CD14-positive monocyte (primary cell): ENCODE measurements at regions of chr3 and their contacts with region 1.

Region 1: GRCh38 chr3:177197041-177197727 is at the start of gene TBL1XR1:
- DNase-seq: peak; percentile 76 to 80 (median 79)
- H3K4me3 ChIP-seq: peak within 1 kb of the TSS; percentile 86 to 98 (median 96)
- H3K4me3 Mint-ChIP-seq: peak within 1 kb of the TSS; percentile 96 to 97
- H3K27ac ChIP-seq: peak within 1 kb of the TSS; percentile 77 to 92
- H3K27ac Mint-ChIP-seq: peak within 1 kb of the TSS; percentile 92 to 98 (median 96)
- H3K4me1 ChIP-seq: peaks cover 22 to 42% of the 10 kb centered on the region in 2 donors
- H3K4me1 Mint-ChIP-seq: peaks cover 44% of the 10 kb centered on the region
- H3K27me3 ChIP-seq: no peaks in the 10 kb centered on the region
- H3K27me3 Mint-ChIP-seq: no peaks in the 10 kb centered on the region
- CTCF ChIP-seq: no peak
- polyA plus RNA-seq, gene TBL1XR1: 10.2 to 20.4 (median 18.3) TPM

Region 2: DNA sequence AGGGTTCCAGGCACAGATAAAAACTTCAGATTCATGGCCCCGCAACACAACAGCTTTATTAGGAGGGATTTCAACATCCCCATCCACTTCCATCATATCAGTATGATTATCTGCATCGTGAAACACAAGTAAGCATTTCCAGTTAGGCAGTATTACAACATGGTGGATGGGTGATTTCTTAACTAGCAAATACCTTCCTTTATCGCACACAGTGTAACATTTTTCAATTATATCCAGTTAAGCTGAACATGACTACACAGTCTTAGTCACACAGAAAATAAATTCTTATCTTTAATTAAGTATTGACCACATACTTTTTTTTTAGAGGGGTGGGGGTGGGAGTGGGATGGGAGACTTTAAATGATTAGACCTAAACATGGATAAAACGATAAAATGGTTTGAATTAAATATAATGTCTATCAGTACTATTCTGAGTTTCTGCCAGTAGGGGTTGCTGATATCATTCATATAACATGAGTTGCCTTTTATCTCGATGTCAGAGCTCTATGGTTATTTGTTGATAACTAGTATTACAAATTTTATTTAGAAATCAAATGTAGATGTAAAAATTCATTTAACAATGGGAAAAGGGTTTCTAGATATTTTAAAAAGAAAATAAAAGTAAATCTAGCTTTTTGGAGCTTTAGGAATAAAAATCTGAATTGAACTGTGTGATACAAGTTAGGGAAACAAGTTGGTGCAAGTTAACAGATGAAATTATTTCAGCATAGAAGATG is 146.5 kb before region 1 on chr3:
- intact Hi-C with region 1: loop called in 1 of 2 experiments (anchors 5 kb)
- DNase-seq: peak; percentile 18 to 54 (median 33)
- H3K4me3 ChIP-seq: no peak overlapping the region
- H3K4me3 Mint-ChIP-seq: no peak overlapping the region
- H3K27ac ChIP-seq: no peak overlapping the region
- H3K27ac Mint-ChIP-seq: no peak overlapping the region
- H3K4me1 ChIP-seq: no peaks in the 10 kb centered on the region
- H3K4me1 Mint-ChIP-seq: no peaks in the 10 kb centered on the region
- H3K27me3 ChIP-seq: no peaks in the 10 kb centered on the region
- H3K27me3 Mint-ChIP-seq: no peaks in the 10 kb centered on the region
- CTCF ChIP-seq: peak; percentile 75

Region 3: DNA sequence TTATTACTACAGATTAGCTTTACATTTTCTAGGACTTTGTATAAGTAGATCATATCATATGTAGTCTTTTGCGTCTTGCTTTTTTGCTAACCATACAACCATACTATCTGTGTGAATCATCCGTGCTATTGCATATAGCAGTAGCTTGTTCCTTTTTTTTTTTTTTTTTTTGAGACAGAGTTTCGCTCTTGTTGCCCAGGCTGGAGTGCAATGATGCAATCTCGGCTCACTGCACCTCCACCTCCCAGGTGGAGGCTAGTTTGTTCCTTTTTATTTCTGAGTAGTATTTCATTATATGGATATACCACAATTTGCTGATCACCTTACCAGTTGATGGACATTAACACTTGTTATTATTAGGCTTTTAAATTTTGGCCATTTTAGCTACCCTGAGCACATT is 54.6 kb after region 1 on chr3:
- intact Hi-C with region 1: loop called in 1 of 2 experiments (anchors 10 kb)
- DNase-seq: peak; percentile 60 to 82 (median 76)
- H3K4me3 ChIP-seq: no peak overlapping the region
- H3K4me3 Mint-ChIP-seq: peak overlapping the region in 1 of 2 donors; percentile 58
- H3K27ac ChIP-seq: peak overlapping the region in 1 of 2 donors; percentile 15
- H3K27ac Mint-ChIP-seq: peak overlapping the region in 6 of 7 donors; percentile 56 to 70 (median 64)
- H3K4me1 ChIP-seq: peaks cover 13 to 17% of the 10 kb centered on the region in 2 donors
- H3K4me1 Mint-ChIP-seq: peaks cover 19% of the 10 kb centered on the region
- H3K27me3 ChIP-seq: no peaks in the 10 kb centered on the region
- H3K27me3 Mint-ChIP-seq: peaks cover 0 to 3% (median 0%) of the 10 kb centered on the region in 3 donors
- CTCF ChIP-seq: no peak

Region 4: DNA sequence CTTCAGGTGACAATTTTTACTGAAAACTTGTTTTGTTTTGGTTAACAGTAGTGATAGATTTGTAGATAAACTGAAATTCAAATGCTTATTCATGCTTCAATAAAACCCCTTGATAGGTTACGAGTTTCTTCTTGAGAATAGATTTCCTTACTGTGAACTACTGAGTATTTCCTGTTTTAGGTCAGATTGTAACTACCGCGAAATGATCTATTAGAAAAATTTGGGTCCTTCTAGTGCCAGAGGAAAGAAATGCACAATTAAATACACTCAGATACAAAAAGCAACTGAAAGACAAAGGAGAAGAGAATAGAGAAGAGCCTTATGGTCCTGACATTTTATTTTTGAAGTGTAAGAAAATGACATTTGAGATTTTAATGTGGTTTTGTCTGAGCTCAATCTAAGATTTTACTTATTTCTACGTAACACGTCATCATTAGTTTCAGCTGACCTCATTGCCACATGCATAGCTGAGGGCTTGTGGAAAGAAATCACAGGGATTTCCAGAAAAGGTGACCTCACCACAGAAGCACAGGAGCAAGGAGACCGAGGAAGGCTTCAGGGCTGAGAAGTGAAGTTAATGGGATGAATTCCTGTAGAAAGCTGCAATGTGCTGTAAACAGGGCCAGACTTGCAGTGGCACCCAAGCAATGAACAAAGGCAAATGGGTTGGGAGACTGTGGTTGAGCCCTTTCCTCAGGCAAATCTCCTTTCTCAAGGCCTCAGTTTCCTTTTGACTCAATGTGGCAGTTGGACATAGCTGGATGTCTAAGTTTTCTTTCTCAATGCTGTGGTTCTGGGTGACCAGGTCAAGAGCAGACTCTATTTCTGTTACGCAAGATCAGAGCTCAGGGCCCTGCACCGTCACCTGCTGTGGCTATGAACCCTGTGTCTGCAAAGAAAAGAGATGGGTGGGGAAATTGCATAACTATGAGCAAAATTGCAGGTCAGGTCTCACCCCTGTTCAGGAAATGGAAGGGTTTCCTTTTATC is 252.1 kb after region 1 on chr3:
- intact Hi-C with region 1: loop called (anchors 5 to 10 kb)
- DNase-seq: peak; percentile 68 to 93 (median 82)
- H3K4me3 ChIP-seq: peak overlapping the region in 1 of 3 experiments; percentile 17
- H3K4me3 Mint-ChIP-seq: peak overlapping the region in 1 of 2 donors; percentile 81
- H3K27ac ChIP-seq: peak overlapping the region; percentile 24 to 62
- H3K27ac Mint-ChIP-seq: peak overlapping the region; percentile 83 to 94 (median 86)
- H3K4me1 ChIP-seq: peaks cover 64 to 81% of the 10 kb centered on the region in 2 donors
- H3K4me1 Mint-ChIP-seq: peaks cover 28% of the 10 kb centered on the region
- H3K27me3 ChIP-seq: no peaks in the 10 kb centered on the region
- H3K27me3 Mint-ChIP-seq: no peaks in the 10 kb centered on the region
- CTCF ChIP-seq: no peak

Region 5: DNA sequence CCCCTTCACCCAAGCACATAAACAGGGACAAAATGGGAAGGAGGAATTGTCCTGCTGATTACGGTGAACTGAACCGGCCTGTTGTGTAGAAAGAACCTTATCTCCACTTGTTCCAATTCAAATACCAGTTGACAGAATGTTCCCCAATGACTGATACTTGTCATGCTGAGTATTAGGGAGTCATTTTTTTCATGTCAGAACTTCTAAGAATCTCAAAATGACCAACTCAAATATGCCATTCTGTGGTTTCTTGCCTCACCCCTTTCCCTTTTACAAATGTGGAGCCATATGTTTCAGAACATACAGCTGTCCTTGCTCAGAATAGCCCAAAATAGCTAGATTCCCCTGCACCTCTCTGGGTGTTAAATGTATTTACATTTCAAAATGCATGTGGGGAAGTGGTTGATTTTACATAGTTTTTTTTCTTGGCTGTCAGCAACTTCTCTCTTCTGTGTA is 406.0 kb after region 1 on chr3:
- intact Hi-C with region 1: loop called in 1 of 2 experiments (anchors 10 kb)
- DNase-seq: peak; percentile 24 to 40 (median 25)
- H3K4me3 ChIP-seq: peak overlapping the region in 1 of 3 experiments; percentile 15
- H3K4me3 Mint-ChIP-seq: peak overlapping the region in 1 of 2 donors; percentile 58
- H3K27ac ChIP-seq: peak overlapping the region in 1 of 2 donors; percentile 42
- H3K27ac Mint-ChIP-seq: peak overlapping the region in 6 of 7 donors; percentile 61 to 93 (median 75)
- H3K4me1 ChIP-seq: peaks cover 55 to 60% of the 10 kb centered on the region in 2 donors
- H3K4me1 Mint-ChIP-seq: peaks cover 56% of the 10 kb centered on the region
- H3K27me3 ChIP-seq: no peaks in the 10 kb centered on the region
- H3K27me3 Mint-ChIP-seq: peaks cover 0 to 8% (median 2%) of the 10 kb centered on the region in 3 donors
- CTCF ChIP-seq: no peak